GM23248 (cell line): ENCODE measurements at regions of chr2 and their contacts with region 1.

Region 1: DNA sequence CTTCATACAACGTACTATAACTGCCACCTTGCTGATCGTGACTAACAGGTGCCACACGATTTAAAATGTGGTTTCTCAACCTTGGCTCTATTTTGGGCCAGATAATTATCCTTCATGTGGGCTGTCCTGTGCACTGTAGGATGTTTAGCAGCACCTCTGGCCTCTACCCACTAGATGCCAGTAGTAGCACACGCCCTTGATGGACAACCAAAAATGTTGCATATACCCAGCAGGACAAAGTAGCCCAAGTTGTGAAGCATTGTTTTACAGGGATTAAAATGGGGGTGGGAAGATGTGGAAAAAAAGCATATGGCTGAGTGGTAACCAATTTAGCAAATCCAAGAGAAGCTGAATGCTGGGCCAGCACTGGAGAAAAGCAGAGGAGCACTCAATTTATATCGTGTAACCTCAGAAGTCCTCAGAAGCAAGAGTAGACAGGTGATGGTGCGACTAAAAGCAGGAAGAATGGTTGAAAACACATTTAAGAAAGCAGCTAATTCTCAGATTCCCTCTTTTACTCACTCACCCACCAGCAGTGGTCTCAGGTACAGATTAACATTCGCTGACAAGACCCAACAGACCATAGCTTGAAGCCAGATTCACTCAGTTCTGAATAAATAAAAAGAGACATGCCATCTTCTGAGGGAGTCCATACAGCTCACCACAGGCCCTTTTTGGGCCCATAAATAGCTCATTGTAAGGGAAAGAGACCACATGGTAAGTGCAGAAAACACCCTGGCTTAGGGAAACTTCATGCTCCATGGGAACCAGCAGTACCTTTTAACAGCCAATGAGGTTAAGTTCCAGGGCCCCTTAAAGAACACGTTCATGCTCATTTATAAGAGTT is 50.6 kb downstream of the RAPH1 start:
- DNase-seq: no peak
- H3K4me3 ChIP-seq: no peak overlapping the region
- H3K27ac ChIP-seq: peak overlapping the region; percentile 10; the same call in 1 of the 2 replicates
- H3K4me1 ChIP-seq: no peaks in the 10 kb centered on the region
- H3K27me3 ChIP-seq: no peaks in the 10 kb centered on the region

Region 2: GRCh38 chr2:203730076-203730729 is 245.7 kb after region 1 on chr2:
- in situ Hi-C with region 1: no loop called
- DNase-seq: peak; percentile 42
- H3K4me3 ChIP-seq: no peak overlapping the region
- H3K27ac ChIP-seq: no peak overlapping the region
- H3K4me1 ChIP-seq: peaks cover 5% of the 10 kb centered on the region; the same call in 1 of the 2 replicates
- H3K27me3 ChIP-seq: no peaks in the 10 kb centered on the region

Region 3: GRCh38 chr2:203814661-203815540 is 330.4 kb after region 1 on chr2:
- in situ Hi-C with region 1: loop called (anchors 25 kb)
- DNase-seq: peak; percentile 92
- H3K4me3 ChIP-seq: peak overlapping the region; percentile 22; the same call in 1 of the 2 replicates
- H3K27ac ChIP-seq: no peak overlapping the region
- H3K4me1 ChIP-seq: peaks cover 49% of the 10 kb centered on the region
- H3K27me3 ChIP-seq: no peaks in the 10 kb centered on the region